ENCODE measurements at regions of chr12 and their contacts with region 1.

Region 1: DNA sequence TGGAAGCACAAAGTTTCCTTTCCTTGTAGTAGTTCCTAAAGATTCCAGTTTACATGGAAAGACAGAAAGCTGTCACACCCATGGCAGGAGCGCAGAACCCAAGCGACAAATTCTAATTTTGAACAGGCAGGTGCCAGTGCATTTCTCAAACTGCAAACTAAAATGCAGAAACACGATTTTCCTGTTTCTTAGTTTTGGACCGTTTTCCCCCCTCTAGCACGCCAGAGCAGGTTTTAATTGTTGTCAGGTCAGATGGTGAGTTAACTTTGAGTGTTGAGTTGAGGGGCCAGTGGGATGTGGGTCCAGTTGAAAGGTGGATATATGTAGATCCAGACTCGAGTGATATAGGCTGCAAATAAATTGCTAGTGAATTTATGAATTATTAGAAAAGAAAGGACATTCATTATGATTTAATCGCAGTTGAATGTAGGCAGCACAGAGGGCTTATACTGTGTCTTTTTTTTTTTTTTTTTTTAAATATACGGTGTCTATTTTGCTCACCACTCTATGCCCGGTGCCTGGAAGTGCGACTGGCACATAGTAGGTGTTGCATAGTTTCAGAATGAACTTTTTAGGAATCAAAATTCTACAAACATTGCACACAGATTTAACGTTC is 909 bp upstream of the ETFBKMT start:
- DNase-seq: no peak
- H3K4me3 ChIP-seq: peak overlapping the region; percentile 86
- H3K27ac ChIP-seq: no peak overlapping the region
- H3K27me3 ChIP-seq: no peaks in the 10 kb centered on the region
- CTCF ChIP-seq: no peak

Region 2: DNA sequence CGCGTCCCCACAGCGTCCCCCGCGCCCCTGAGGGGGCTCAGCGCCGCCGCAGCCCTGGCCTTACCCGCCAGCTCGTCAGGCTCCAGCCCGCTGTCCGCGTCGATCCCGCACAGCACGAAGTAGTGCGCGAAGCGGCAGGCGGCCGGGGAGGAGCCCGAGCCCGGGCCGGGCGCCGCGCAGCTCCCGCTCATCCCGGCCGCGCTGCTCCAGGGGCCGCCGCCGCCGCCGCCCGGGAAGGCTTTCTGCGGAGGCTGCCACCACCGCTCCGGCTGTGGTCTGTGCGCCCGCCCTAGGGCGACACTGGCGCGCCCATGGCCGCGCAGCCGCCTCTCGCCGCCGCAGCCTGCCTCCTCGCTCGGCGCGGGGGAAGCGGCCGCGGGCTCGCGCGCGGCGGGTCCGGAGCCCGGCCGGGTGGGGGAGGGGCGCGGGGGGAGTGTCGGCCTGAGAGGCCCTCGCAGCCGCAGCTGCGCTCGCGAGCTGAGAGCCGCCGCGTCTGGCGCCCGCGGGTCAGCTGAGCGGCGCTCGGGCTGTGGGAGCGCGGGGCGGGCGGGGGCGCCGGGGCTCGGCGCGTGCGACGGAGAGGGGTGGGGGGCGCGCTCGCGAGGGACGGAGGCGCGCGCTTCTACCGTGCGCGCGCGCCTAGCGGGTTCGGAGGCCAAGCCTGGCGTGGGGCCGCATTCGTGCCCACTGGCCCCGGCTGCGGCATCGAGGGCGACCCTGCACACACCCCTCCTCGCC is 67.8 kb before region 1 on chr12 and contains the start of gene DENND5B:
- CTCF ChIA-PET with region 1: no interaction called
- POLR2A ChIA-PET with region 1: no interaction called
- DNase-seq: no peak
- H3K4me3 ChIP-seq: peak within 1 kb of the TSS; percentile 86
- H3K27ac ChIP-seq: peak within 1 kb of the TSS; percentile 93
- H3K27me3 ChIP-seq: no peaks in the 10 kb centered on the region
- CTCF ChIP-seq: no peak
- polyA plus RNA-seq, gene DENND5B: 14.7 and 17.3 TPM in 2 replicates

Region 3: GRCh38 chr12:31773867-31774266 is 115.3 kb after region 1 on chr12:
- CTCF ChIA-PET with region 1: no interaction called
- POLR2A ChIA-PET with region 1: no interaction called
- DNase-seq: no peak
- H3K4me3 ChIP-seq: no peak overlapping the region
- H3K27ac ChIP-seq: no peak overlapping the region
- H3K27me3 ChIP-seq: peaks cover 2% of the 10 kb centered on the region
- CTCF ChIP-seq: no peak

Region 4: DNA sequence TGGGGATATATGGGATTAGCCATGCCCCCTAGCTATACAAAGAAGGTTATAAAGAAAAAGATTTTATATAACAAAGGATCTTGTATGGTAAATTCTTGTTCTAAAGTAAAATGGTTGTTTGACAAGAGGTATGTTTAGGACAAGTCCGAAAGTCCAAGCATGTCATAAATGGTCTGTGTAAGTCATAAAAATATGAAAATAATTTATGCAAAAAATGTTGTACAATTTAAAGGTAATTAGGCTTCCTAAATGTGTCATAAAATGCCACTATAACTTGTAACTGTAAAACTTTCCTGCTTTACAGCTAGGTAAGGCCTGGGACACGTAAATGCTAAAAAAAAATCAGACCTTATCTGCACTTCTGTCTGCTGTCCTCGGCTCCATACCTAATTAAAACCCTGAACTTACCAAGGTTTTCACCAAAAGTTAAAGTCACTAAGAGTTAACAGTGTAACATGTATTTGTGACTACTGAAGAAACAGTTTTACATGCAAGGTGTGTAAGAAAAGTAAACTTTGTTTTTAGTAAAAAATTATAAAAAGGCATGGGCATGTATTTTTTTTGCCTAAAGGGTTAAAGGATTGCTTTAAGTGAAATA is 190.6 kb after region 1 on chr12:
- CTCF ChIA-PET with region 1: no interaction called
- POLR2A ChIA-PET with region 1: no interaction called
- DNase-seq: no peak
- H3K4me3 ChIP-seq: no peak overlapping the region
- H3K27ac ChIP-seq: no peak overlapping the region
- H3K27me3 ChIP-seq: no peaks in the 10 kb centered on the region
- CTCF ChIP-seq: no peak

Region 5: GRCh38 chr12:32002848-32003493 is 344.4 kb after region 1 on chr12:
- CTCF ChIA-PET with region 1: interaction called, 10 read pairs
- POLR2A ChIA-PET with region 1: no interaction called
- DNase-seq: no peak
- H3K4me3 ChIP-seq: no peak overlapping the region
- H3K27ac ChIP-seq: no peak overlapping the region
- H3K27me3 ChIP-seq: no peaks in the 10 kb centered on the region
- CTCF ChIP-seq: no peak

Region 6: DNA sequence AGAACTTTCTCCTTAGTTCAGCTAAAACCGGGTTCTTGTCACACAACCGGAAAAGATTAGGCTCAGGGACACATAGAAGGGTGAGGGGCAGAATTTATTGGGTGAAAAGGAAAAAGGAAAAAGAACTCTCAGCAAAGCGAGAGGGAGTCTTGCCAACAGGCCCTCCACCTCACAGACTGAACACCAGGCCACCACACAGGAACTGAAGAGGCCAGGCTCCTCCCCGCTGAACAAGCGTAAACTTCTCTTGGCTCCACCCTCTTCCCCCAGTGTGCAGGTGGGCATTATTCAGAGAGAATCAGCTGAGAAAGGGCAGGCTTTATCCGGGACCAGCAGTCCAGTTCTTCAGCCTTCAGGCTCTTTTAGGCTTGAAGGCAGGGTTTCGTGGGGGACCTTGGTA is 615.1 kb after region 1 on chr12:
- CTCF ChIA-PET with region 1: interaction called, 4 read pairs
- POLR2A ChIA-PET with region 1: interaction called, 14 read pairs
- DNase-seq: no peak
- H3K4me3 ChIP-seq: no peak overlapping the region
- H3K27ac ChIP-seq: no peak overlapping the region
- H3K27me3 ChIP-seq: no peaks in the 10 kb centered on the region
- CTCF ChIP-seq: no peak